Left cardiac atrium (tissue), 4 donors: ENCODE measurements at regions of chr1 and their contacts with region 1.

Region 1: DNA sequence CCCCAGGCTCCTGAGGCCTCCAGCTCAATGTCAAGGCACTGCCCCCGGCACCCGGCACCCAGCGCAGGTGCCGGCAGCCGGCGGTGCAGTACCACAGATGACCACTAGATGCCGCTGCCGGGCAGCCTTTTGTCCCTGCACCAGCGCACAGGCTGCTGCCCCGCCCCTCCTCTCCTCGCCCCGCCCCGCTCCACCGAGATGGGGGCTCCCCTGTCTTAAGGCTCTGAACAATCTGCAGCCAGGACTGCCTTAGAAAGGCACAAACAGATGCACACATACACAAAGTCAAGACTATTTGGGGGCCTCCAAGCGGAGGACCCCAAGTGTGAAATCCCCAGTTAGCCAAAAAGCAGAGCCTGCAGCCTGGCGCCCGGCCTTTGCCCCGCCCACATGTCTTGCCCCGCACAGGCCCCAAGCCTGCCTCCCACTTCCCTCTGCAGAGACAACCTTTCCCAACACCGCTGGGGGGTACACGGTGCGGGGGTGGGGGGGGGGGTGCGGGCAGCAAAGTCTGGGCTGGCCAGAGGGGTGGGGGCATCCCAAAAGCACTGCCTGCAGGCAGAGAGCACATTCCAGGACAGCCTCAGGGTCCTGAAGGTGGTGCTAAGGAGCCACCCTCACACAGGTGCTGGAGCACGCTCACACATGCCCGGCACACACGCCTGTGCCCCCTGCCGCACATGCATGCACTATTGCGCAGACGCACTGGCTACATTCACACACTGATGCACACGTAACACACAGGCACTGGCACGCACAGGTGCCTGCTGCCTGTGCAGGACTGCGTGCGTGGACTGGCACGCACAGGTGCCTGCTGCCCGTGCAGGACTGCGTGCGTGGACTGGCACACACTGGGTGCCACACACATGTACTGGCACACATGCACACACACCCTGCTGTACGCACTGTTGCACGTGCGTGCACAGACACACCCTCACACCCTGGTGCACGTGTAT is 37.1 kb downstream of the ARHGEF16 start:
- DNase-seq: peak; percentile 82
- ATAC-seq: peak; percentile 85 to 86

Region 2: DNA sequence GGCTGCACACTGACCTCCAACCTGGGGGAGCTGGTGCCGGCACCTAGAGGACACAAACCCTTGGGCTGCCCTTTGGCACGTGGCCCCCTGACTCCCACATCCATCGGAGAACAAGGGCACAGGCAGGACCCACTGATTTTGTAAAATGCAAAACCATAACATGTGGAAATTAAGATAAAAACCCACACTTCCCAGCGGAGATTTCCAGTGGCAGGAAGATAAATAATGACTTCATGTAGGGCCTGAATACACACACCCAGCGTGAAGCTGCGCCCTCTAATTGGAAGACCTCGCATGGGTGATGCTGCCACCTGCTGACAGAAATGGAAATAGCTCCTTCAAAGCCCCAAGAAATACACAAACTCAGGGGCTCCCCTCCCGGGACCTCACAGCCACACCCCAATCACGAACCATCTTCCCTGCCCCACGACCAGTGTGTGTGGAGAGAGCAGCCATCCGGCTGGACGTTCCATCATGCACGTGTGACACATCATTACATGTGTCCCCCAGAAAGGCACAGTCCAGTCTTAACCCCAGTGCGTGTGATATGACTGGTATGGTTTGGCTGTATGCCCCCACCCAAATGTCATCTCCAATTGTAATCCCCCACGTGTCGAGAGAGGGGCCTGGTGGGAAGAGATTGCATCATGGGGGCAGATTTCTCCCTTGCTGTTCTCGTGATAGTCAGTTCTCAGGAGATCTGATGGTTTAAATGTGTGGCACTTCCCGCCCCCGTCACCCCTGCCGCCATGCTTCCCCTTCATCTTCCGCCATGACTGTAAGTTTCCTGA is 127.5 kb after region 1 on chr1:
- intact Hi-C with region 1: loop called (anchors 1 to 2 kb)
- DNase-seq: peak; percentile 77
- ATAC-seq: peak; percentile 72 to 82

Region 3: DNA sequence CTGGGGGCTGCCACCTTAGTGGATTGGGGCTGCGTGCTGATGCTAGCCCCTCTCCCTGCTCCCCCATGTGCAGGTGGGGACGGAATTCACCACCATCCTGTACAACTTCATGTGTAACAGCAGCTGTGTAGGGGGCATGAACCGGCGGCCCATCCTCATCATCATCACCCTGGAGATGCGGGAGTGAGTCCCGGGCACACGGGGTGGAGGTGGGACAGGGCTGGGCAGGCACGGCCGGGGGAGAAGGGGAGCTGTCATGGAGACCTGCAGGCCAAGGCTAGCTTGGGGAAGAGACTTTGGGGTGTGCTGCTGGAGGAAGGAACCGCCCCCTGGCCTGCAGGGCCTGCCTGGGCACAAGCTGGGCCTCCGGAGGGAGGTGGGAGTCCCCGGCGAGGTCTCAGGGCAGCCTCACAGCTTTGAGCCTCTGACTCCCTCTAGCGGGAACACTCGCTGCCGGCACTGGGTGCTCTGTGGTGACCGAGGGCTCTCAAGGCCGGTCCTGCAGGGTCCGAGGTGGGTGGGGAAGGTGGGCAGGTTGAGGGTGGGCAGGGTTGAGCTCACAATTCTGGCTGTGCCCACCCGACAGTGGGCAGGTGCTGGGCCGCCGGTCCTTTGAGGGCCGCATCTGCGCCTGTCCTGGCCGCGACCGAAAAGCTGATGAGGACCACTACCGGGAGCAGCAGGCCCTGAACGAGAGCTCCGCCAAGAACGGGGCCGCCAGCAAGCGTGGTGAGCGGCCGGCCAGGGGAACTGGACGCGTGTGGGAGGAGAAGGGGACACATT is 235.7 kb after region 1 on chr1:
- intact Hi-C with region 1: loop called in 1 of 2 experiments (anchors 10 kb)
- DNase-seq: no peak
- ATAC-seq: no peak